ENCODE measurements at regions of chr14 and their contacts with region 1.

Region 1: GRCh38 chr14:69460093-69460701 is 24.3 kb upstream of the PLEKHD1 start:
- DNase-seq: peak; percentile 71
- ATAC-seq: peak; percentile 85
- H3K4me3 Mint-ChIP-seq: no peak overlapping the region
- H3K27ac Mint-ChIP-seq: no peak overlapping the region
- H3K4me1 Mint-ChIP-seq: no peaks in the 10 kb centered on the region
- H3K27me3 Mint-ChIP-seq: no peaks in the 10 kb centered on the region

Region 2: GRCh38 chr14:69129264-69129880 is 330.8 kb before region 1 on chr14:
- CTCF ChIA-PET with region 1: interaction called, 27 read pairs
- POLR2A ChIA-PET with region 1: no interaction called
- DNase-seq: peak; percentile 82
- ATAC-seq: peak; percentile 87
- H3K4me3 Mint-ChIP-seq: no peak overlapping the region
- H3K27ac Mint-ChIP-seq: no peak overlapping the region
- H3K4me1 Mint-ChIP-seq: peaks cover 32% of the 10 kb centered on the region
- H3K27me3 Mint-ChIP-seq: no peaks in the 10 kb centered on the region

Region 3: DNA sequence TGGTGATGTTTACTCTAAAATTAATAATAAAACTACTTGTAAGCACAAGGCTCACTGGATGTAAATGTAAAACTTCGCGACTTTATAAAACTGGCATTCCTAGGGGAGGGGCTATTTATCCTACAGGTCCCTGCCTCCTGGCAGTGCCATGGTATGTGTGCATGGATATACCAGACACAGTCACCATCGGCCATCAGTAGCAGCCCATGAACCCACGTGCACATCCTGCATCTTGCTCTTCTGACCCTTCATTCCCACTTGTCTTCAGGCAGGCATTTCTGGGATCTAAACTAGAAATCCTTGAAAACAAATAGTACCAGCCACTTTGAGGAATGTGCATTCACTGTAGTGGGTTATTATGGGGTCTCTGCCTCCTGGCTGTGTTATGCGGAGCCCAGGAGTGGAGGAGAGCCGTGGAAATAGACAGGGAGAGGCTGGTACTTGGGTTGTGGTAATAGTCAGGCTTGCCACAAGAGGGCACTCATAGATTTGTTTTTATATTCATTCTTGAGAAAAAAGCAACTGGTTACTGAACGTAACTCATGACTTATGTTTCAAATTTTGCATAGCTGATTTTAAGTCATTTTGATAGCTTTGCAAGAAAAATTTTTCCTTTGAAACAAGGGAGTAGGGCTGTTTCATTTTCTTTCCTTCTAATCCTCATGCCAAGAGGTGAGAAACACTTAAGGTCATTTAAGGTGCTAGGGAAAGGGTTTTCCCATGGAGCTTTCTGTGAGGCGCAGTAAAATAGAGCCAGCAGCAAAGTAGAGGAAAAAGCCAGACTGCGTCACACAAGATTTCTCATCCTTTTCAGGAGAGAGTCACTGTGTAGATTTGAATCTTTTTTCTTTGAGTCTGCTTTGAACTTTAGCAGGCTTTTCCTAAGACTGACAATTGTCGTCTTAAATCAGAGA is 217.6 kb before region 1 on chr14:
- CTCF ChIA-PET with region 1: interaction called, 65 read pairs
- POLR2A ChIA-PET with region 1: no interaction called
- DNase-seq: peak; percentile 71
- ATAC-seq: peak; percentile 63
- H3K4me3 Mint-ChIP-seq: no peak overlapping the region
- H3K27ac Mint-ChIP-seq: no peak overlapping the region
- H3K4me1 Mint-ChIP-seq: peaks cover 2% of the 10 kb centered on the region
- H3K27me3 Mint-ChIP-seq: peaks cover 5% of the 10 kb centered on the region

Region 4: DNA sequence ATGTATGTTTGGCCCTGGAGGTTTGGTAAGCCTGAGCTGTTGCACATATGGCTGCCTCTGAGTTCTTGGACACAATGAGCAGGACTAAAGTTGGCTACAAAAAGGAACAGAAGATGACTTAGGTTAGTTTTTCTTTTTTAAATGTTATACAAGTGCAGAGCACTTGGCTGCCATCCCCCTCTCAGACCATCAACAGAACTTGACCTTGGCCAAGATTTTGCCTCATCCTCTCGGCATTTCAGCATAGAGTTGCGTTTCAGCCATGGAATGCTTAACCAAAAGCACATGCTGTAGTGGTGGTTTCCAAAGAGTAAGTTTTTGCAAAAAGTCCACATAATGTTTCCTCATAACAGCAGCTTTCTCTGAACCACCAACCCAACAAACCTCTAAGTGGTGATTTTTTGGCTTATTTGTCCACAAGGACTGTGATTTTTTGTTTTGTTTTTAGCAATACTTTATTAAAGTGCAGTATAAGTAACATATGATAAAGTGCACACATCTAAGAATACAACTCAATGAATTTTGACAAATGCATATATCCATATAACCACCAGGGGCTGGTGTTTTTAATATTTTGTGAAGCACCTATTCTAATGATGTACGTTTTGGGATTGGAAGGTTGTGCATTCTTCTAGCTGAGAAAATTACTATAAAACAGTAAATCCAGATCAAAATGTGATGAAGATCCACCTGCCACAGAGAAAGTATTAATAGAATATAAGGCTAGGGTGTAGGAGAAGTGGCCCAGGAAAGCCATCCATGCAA is 212.3 kb before region 1 on chr14:
- CTCF ChIA-PET with region 1: interaction called, 65 read pairs
- POLR2A ChIA-PET with region 1: no interaction called
- DNase-seq: no peak
- ATAC-seq: no peak
- H3K4me3 Mint-ChIP-seq: no peak overlapping the region
- H3K27ac Mint-ChIP-seq: no peak overlapping the region
- H3K4me1 Mint-ChIP-seq: no peaks in the 10 kb centered on the region
- H3K27me3 Mint-ChIP-seq: peaks cover 19% of the 10 kb centered on the region

Region 5: GRCh38 chr14:69398053-69398817 is 62.0 kb before region 1 on chr14 and contains the starts of genes ERH and SLC39A9:
- CTCF ChIA-PET with region 1: interaction called, 11 read pairs
- POLR2A ChIA-PET with region 1: no interaction called
- DNase-seq: peak; percentile 97
- ATAC-seq: peak; percentile 85
- H3K4me3 Mint-ChIP-seq: peak within 1 kb of the TSS; percentile 93
- H3K27ac Mint-ChIP-seq: peak within 1 kb of the TSS; percentile 99
- H3K4me1 Mint-ChIP-seq: peaks cover 66% of the 10 kb centered on the region
- H3K27me3 Mint-ChIP-seq: no peaks in the 10 kb centered on the region
- total RNA-seq, gene ERH: 290 to 318 TPM
- total RNA-seq, gene SLC39A9: 44.5 to 46.2 TPM

Region 6: DNA sequence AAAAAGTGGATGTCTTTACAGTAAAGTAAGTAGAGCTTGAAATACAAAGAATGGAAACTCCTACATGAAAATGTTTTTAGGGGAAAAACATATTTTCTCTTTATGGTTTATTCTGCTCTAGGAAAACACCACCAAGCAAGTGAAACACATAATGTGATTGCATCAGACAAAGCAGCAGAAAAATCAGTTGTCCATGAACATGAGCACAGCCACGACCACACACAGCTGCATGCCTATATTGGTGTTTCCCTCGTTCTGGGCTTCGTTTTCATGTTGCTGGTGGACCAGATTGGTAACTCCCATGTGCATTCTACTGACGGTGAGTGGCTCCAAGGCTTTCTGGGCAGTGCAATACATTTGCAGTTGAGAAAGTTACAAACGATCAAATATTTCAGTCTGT is 18.2 kb before region 1 on chr14:
- CTCF ChIA-PET with region 1: interaction called, 14 read pairs
- POLR2A ChIA-PET with region 1: no interaction called
- DNase-seq: no peak
- ATAC-seq: no peak
- H3K4me3 Mint-ChIP-seq: no peak overlapping the region
- H3K27ac Mint-ChIP-seq: no peak overlapping the region
- H3K4me1 Mint-ChIP-seq: peaks cover 6% of the 10 kb centered on the region
- H3K27me3 Mint-ChIP-seq: no peaks in the 10 kb centered on the region

Region 7: DNA sequence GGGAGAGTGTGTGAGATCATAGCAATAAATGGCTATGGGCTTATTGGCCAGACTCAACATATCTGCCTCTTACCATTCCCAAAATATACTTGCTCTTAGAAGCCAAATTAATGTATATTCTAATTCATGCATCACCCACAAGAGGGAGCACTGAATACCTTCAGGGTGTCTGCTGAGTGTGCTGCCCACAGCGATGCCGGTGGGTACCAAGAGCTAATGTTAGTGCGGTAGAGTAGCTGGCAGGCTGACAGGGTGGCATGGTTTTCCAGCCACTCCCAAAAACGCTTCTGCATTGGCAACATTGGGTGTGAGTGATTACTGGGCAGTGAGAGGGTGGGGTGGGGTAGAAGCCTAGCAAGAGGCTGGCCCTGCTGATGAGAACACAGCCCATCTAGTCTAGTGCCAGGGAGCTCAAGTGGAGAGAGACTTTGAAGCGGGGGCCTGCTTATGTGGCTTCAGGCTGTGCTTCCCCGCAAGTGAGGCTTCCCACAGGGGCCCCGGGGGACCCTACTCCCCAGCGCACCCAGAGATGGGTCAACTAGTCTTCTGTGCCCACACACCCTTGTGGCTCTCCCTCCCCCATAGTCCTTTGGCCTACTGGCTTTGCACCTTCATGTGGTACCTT is 15.1 kb after region 1 on chr14:
- CTCF ChIA-PET with region 1: interaction called, 14 read pairs
- POLR2A ChIA-PET with region 1: no interaction called
- DNase-seq: peak; percentile 24
- ATAC-seq: peak; percentile 49
- H3K4me3 Mint-ChIP-seq: no peak overlapping the region
- H3K27ac Mint-ChIP-seq: no peak overlapping the region
- H3K4me1 Mint-ChIP-seq: peaks cover 3% of the 10 kb centered on the region
- H3K27me3 Mint-ChIP-seq: no peaks in the 10 kb centered on the region

Region 8: GRCh38 chr14:69543341-69544249 is 83.4 kb after region 1 on chr14:
- CTCF ChIA-PET with region 1: no interaction called
- POLR2A ChIA-PET with region 1: no interaction called
- DNase-seq: peak; percentile 77
- ATAC-seq: peak; percentile 92
- H3K4me3 Mint-ChIP-seq: no peak overlapping the region
- H3K27ac Mint-ChIP-seq: peak overlapping the region; percentile 65
- H3K4me1 Mint-ChIP-seq: peaks cover 21% of the 10 kb centered on the region
- H3K27me3 Mint-ChIP-seq: peaks cover 32% of the 10 kb centered on the region

Measured in activated CD8-positive, alpha-beta T cell treated with anti-CD3 and anti-CD28 coated beads, Interleukin-2, amount 10 ng/mL, durations not matched to agents 7 days and 5 days (primary cell).